ENCODE measurements at regions of chr19 and their contacts with region 1.

Region 1: GRCh38 chr19:12551060-12551832 is at the start of gene ZNF564:
- DNase-seq: peak; percentile 96
- ATAC-seq: peak; percentile 98
- H3K4me3 ChIP-seq: peak within 1 kb of the TSS; percentile 81 to 95 (median 86)
- H3K4me3 Mint-ChIP-seq: peak within 1 kb of the TSS; percentile 100
- H3K27ac ChIP-seq: peak within 1 kb of the TSS; percentile 70 to 87
- H3K27ac Mint-ChIP-seq: peak within 1 kb of the TSS; percentile 94
- H3K4me1 ChIP-seq: peaks cover 20 to 29% of the 10 kb centered on the region in 2 donors
- H3K4me1 Mint-ChIP-seq: peaks cover 45% of the 10 kb centered on the region
- H3K27me3 ChIP-seq: no peaks in the 10 kb centered on the region
- H3K27me3 Mint-ChIP-seq: no peaks in the 10 kb centered on the region
- CTCF ChIP-seq: no peak
- total RNA-seq, gene ZNF564: 31.8 and 35.8 TPM in 2 replicates

Region 2: GRCh38 chr19:12162882-12163806 is 388.1 kb before region 1 on chr19 and contains the start of gene ZNF136:
- CTCF ChIA-PET with region 1: no interaction called
- POLR2A ChIA-PET with region 1: no interaction called
- intact Hi-C with region 1: loop called (anchors 2 kb)
- DNase-seq: peak; percentile 94
- ATAC-seq: peak; percentile 99
- H3K4me3 ChIP-seq: peak within 1 kb of the TSS; percentile 58 to 96 (median 91)
- H3K4me3 Mint-ChIP-seq: peak within 1 kb of the TSS; percentile 92
- H3K27ac ChIP-seq: peak within 1 kb of the TSS; percentile 96 to 99
- H3K27ac Mint-ChIP-seq: peak within 1 kb of the TSS; percentile 99
- H3K4me1 ChIP-seq: peaks cover 10 to 15% of the 10 kb centered on the region in 2 donors
- H3K4me1 Mint-ChIP-seq: peaks cover 34% of the 10 kb centered on the region
- H3K27me3 ChIP-seq: no peaks in the 10 kb centered on the region
- H3K27me3 Mint-ChIP-seq: no peaks in the 10 kb centered on the region
- CTCF ChIP-seq: no peak
- total RNA-seq, gene ZNF136: 30.8 and 33.5 TPM in 2 replicates

Region 3: GRCh38 chr19:12400633-12401502 is 150.4 kb before region 1 on chr19 and contains the start of gene ZNF799:
- CTCF ChIA-PET with region 1: no interaction called
- POLR2A ChIA-PET with region 1: no interaction called
- intact Hi-C with region 1: loop called (anchors 2 kb)
- DNase-seq: peak; percentile 89
- ATAC-seq: peak; percentile 91
- H3K4me3 ChIP-seq: peak within 1 kb of the TSS; percentile 61 to 93 (median 90)
- H3K4me3 Mint-ChIP-seq: peak within 1 kb of the TSS; percentile 91
- H3K27ac ChIP-seq: peak within 1 kb of the TSS in 1 of 2 donors; percentile 68
- H3K27ac Mint-ChIP-seq: peak within 1 kb of the TSS; percentile 85
- H3K4me1 ChIP-seq: peaks cover 4 to 7% of the 10 kb centered on the region in 2 donors
- H3K4me1 Mint-ChIP-seq: peaks cover 20% of the 10 kb centered on the region
- H3K27me3 ChIP-seq: no peaks in the 10 kb centered on the region
- H3K27me3 Mint-ChIP-seq: no peaks in the 10 kb centered on the region
- CTCF ChIP-seq: no peak
- total RNA-seq, gene ZNF799: 10.5 and 11.1 TPM in 2 replicates

Region 4: DNA sequence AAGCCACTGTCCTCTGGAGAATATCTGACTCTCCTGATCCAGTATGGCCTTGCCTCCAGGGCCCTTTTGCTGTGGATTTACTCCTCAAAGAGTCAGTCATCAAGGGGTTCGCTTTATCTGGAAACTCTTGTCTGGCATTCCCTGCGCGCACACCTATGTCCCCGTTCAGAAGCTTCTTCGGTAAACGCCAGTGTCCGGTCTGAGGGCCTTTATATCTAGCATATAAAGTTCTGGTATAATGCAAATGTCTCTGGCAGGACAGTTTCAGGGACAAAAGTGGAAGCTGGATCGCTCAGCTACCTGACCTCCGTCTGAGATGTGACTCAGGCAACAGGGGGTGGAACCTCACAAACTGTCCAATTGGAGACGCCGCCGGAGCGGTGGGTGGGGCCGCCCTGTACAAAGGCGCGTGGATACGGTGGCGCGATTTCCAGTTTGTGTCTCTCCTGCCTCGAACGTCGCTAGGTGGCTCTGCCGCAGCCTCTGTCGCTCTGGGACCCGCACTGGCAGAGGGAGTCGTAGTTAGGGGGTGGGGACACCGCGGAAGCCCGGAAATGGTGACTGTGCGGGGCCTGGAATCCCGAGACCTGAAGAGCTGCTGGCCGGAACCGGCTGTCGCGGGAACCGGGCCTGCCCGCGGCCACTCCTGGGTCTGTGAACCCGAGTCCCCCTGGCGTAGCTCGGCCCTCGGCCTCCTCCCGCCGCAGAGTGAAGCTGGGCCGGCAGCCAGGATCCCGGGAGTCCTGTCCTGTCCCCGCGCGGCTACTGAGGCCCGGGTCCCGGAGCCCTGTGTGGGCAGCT is 56.0 kb before region 1 on chr19:
- CTCF ChIA-PET with region 1: no interaction called
- POLR2A ChIA-PET with region 1: interaction called, 7 read pairs
- intact Hi-C with region 1: loop called (anchors 1 kb)
- DNase-seq: peak; percentile 95
- ATAC-seq: peak; percentile 99
- H3K4me3 ChIP-seq: peak overlapping the region; percentile 68 to 84 (median 76)
- H3K4me3 Mint-ChIP-seq: peak overlapping the region; percentile 92
- H3K27ac ChIP-seq: peak overlapping the region; percentile 82 to 84
- H3K27ac Mint-ChIP-seq: peak overlapping the region; percentile 86
- H3K4me1 ChIP-seq: peaks cover 7 to 11% of the 10 kb centered on the region in 2 donors
- H3K4me1 Mint-ChIP-seq: peaks cover 14% of the 10 kb centered on the region
- H3K27me3 ChIP-seq: no peaks in the 10 kb centered on the region
- H3K27me3 Mint-ChIP-seq: no peaks in the 10 kb centered on the region
- CTCF ChIP-seq: peak; percentile 56

Region 5: GRCh38 chr19:12666265-12667048 is 115.2 kb after region 1 on chr19 and contains the starts of genes MAN2B1 and WDR83:
- CTCF ChIA-PET with region 1: interaction called, 3 read pairs
- POLR2A ChIA-PET with region 1: interaction called, 6 read pairs
- intact Hi-C with region 1: loop called (anchors 1 kb)
- DNase-seq: peak; percentile 91
- ATAC-seq: peak; percentile 71
- H3K4me3 ChIP-seq: peak within 1 kb of the TSS; percentile 84 to 99 (median 94)
- H3K4me3 Mint-ChIP-seq: peak within 1 kb of the TSS; percentile 98
- H3K27ac ChIP-seq: peak within 1 kb of the TSS; percentile 95 to 99
- H3K27ac Mint-ChIP-seq: peak within 1 kb of the TSS; percentile 97
- H3K4me1 ChIP-seq: peaks cover 37 to 60% of the 10 kb centered on the region in 2 donors
- H3K4me1 Mint-ChIP-seq: peaks cover 67% of the 10 kb centered on the region
- H3K27me3 ChIP-seq: no peaks in the 10 kb centered on the region
- H3K27me3 Mint-ChIP-seq: no peaks in the 10 kb centered on the region
- CTCF ChIP-seq: no peak
- total RNA-seq, gene MAN2B1: 252 and 256 TPM in 2 replicates
- total RNA-seq, gene WDR83: 24.6 and 25.8 TPM in 2 replicates